ENCODE measurements at regions of chr4 and their contacts with region 1.

Region 1: DNA sequence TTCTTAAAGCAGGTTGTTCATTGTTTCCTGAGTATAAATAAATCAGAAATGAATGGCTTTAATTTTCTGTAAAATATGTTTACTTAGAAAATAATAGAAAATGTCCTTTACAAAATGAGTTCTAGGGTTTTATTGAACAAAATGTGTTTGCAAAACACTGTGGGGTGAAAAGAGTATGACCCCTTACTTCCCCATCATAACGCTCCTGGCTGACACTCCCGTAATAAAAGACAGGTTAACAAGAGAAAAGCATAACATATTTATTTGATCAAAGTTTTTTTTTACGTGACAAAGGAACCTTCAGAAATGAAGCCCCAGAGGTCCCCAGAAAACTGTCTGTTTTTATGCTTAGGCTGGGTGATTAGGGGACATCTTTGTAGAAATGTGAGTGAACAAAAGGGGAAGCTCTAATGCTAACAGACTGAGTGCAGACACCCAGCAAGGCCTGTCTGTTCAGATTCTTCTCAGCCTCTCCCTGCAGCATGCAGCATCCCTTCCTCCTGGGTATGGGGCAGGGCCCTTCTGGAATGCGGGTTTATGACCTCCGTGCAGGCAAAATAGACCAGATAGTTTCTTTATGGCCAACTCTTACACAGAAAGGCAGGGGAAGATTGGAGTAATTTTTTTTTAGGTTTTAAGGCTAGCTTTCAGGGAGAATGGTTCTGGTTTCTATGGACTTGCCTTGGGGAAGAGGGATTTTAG is 26.1 kb downstream of the ZFP42 start:
- DNase-seq: peak; percentile 88 to 94
- H3K4me3 ChIP-seq: no peak overlapping the region
- H3K4me3 Mint-ChIP-seq: peak overlapping the region; percentile 41
- H3K27ac Mint-ChIP-seq: peak overlapping the region; percentile 97
- H3K4me1 ChIP-seq: peaks cover 44% of the 10 kb centered on the region
- H3K4me1 Mint-ChIP-seq: peaks cover 24% of the 10 kb centered on the region
- H3K27me3 ChIP-seq: no peaks in the 10 kb centered on the region
- H3K27me3 Mint-ChIP-seq: no peaks in the 10 kb centered on the region
- CTCF ChIP-seq: no peak

Region 2: GRCh38 chr4:187929024-187929423 is 92.7 kb before region 1 on chr4:
- CTCF ChIA-PET with region 1: no interaction called
- POLR2A ChIA-PET with region 1: no interaction called
- intact Hi-C with region 1: loop called (anchors 2 kb)
- DNase-seq: peak; percentile 26 to 46
- H3K4me3 ChIP-seq: no peak overlapping the region
- H3K4me3 Mint-ChIP-seq: no peak overlapping the region
- H3K27ac Mint-ChIP-seq: peak overlapping the region; percentile 49
- H3K4me1 ChIP-seq: peaks cover 17% of the 10 kb centered on the region
- H3K4me1 Mint-ChIP-seq: peaks cover 7% of the 10 kb centered on the region
- H3K27me3 ChIP-seq: no peaks in the 10 kb centered on the region
- H3K27me3 Mint-ChIP-seq: no peaks in the 10 kb centered on the region
- CTCF ChIP-seq: peak in 1 of 2 experiments; percentile 43

Region 3: DNA sequence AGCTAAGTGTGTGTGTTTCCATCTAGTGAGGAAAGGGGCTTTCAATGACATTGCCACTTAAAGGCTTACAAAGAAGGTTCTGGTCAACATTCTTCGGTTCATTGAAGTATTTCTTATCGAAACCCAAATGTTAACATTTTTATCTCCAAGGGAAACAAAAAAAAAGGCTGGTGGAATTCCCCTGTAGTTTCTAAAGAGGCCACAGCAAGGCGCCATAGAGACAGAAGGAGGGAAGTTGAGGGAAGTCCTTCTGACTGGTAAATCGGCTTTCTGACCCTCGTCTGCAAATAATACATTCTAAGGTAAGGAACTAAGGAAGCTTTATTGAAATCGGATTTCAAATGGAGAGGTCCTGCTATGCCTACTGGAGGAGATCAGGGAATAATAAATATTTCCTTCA is 27.9 kb before region 1 on chr4:
- CTCF ChIA-PET with region 1: no interaction called
- POLR2A ChIA-PET with region 1: no interaction called
- intact Hi-C with region 1: loop called (anchors 2 kb)
- DNase-seq: peak in 1 of 2 experiments; percentile 37
- H3K4me3 ChIP-seq: no peak overlapping the region
- H3K4me3 Mint-ChIP-seq: no peak overlapping the region
- H3K27ac Mint-ChIP-seq: no peak overlapping the region
- H3K4me1 ChIP-seq: no peaks in the 10 kb centered on the region
- H3K4me1 Mint-ChIP-seq: no peaks in the 10 kb centered on the region
- H3K27me3 ChIP-seq: no peaks in the 10 kb centered on the region
- H3K27me3 Mint-ChIP-seq: no peaks in the 10 kb centered on the region
- CTCF ChIP-seq: peak in 1 of 2 experiments; percentile 2

Region 4: DNA sequence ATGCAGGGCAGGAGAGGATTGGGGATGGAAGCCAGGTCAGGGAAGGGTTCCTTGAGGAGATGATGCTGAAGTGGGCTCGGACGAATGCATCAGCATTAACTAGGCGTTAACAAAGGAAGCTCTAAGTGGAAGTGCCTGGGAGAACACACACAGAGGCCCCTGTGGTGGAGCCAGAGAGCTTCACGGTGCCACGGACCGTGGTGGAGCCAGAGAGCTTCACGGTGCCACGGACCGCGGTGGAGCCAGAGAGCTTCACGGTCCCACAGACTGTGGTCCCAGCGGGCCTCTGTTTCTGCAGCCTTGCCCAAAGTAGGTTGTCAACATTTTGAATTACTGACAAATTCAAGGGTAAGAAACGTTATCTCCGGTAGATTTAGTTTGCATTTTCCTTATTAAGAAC is 39.4 kb after region 1 on chr4:
- CTCF ChIA-PET with region 1: no interaction called
- POLR2A ChIA-PET with region 1: no interaction called
- intact Hi-C with region 1: no loop called
- DNase-seq: no peak
- H3K4me3 ChIP-seq: no peak overlapping the region
- H3K4me3 Mint-ChIP-seq: no peak overlapping the region
- H3K27ac Mint-ChIP-seq: no peak overlapping the region
- H3K4me1 ChIP-seq: no peaks in the 10 kb centered on the region
- H3K4me1 Mint-ChIP-seq: no peaks in the 10 kb centered on the region
- H3K27me3 ChIP-seq: no peaks in the 10 kb centered on the region
- H3K27me3 Mint-ChIP-seq: no peaks in the 10 kb centered on the region
- CTCF ChIP-seq: no peak

Region 5: DNA sequence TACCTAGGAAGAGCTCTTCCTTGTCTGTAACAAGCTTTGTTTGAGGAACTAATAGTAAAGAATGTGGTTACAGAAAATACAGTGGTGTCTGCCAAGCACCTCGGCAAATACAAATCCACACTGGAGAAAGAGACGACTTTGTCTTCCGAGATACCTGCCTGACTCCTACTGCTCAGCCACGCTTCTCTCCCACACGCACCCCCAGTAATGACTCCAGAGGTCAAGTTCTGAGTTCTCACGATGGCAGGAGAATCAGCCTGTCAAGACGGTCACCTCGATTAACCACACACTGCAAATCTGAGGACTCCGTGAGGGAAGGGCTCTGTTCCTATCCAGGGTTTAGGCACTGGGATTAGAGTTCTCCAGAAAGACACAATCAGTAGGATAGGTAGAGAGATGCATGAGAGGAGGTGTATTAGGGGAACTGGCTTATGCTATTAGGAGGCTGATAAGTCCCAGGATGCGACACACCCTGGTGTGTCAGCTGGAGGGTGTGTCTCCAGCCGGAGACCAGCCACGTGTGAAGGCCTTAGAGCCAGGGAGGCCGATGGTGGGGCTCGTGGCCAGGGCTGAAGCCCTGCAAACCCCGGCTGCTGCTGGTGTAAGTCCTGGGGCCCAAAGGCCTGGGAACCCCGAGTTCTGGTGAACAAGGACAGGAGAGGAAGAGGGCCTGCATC is 96.1 kb after region 1 on chr4:
- CTCF ChIA-PET with region 1: no interaction called
- POLR2A ChIA-PET with region 1: no interaction called
- intact Hi-C with region 1: no loop called
- DNase-seq: no peak
- H3K4me3 ChIP-seq: no peak overlapping the region
- H3K4me3 Mint-ChIP-seq: no peak overlapping the region
- H3K27ac Mint-ChIP-seq: no peak overlapping the region
- H3K4me1 ChIP-seq: no peaks in the 10 kb centered on the region
- H3K4me1 Mint-ChIP-seq: no peaks in the 10 kb centered on the region
- H3K27me3 ChIP-seq: no peaks in the 10 kb centered on the region
- H3K27me3 Mint-ChIP-seq: no peaks in the 10 kb centered on the region
- CTCF ChIP-seq: no peak

Measured in Caco-2 (cell line).